Kidney (tissue), 22 donors: ENCODE measurements at regions of chr10 and their contacts with region 1.

Region 1: GRCh38 chr10:131885391-131886161 is 15.2 kb upstream of the PPP2R2D start:
- DNase-seq: peak; percentile 84 to 88 (median 87)
- H3K4me3 ChIP-seq: no peak overlapping the region
- H3K27ac ChIP-seq: no peak overlapping the region
- H3K4me1 ChIP-seq: no peaks in the 10 kb centered on the region
- H3K27me3 ChIP-seq: no peaks in the 10 kb centered on the region
- CTCF ChIP-seq: peak; percentile 99

Region 2: DNA sequence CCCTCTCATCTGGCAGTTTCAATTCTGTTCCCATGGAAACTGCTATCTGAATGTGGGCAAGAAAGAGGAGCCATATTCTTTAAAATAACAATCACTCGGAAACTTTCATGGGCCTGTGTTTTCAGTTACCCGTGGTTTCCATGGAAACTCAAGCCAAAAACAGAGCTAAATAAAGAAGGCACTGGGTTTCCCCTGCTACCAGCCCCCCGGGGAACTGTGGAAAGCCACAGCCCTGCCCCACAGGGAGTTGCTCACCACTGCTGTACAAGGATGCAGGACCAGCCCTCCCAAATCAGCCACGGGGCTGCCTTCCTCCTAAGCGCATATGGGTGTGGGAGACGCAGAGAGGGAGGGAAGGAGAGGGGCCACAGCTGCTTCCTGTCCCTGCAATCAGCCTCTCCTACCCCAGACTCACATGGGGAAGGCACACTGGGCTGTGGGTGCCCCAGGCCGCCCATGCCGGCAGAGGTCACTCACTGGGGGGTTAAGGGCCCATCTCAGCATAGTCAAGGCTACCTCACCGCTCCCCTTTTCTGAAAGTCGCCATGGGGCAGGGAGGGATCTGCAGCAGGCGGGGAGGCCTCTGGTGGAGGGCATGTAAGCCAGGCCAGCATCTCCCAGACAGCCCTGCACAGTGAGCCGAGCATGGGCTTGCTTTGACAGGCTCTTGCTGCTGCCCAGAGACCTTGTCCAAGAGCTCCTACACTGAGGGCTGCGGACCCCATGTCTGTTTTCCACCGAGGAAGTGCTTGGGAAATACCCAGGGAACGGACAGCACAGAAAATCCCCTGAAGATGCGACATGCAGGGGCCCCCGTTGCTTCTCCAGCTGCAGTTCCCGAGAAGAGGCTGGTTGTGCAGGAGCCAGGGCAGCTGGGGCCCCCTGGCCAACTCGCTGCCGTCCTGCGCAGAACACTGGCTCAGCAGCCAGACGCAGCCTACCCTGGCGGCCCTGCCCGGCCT is 142.1 kb before region 1 on chr10:
- intact Hi-C with region 1: no loop called
- DNase-seq: peak in 4 of 5 donors; percentile 49 to 77 (median 60)
- H3K4me3 ChIP-seq: no peak overlapping the region
- H3K27ac ChIP-seq: no peak overlapping the region
- H3K4me1 ChIP-seq: peaks cover 0 to 1% (median 0%) of the 10 kb centered on the region in 3 donors
- H3K27me3 ChIP-seq: no peaks in the 10 kb centered on the region
- CTCF ChIP-seq: no peak

Region 3: GRCh38 chr10:132023092-132023811 is 137.7 kb after region 1 on chr10:
- intact Hi-C with region 1: loop called (anchors 5 kb)
- DNase-seq: peak; percentile 80 to 92 (median 86)
- H3K4me3 ChIP-seq: peak overlapping the region in 2 of 3 donors; percentile 31 to 56
- H3K27ac ChIP-seq: no peak overlapping the region
- H3K4me1 ChIP-seq: no peaks in the 10 kb centered on the region
- H3K27me3 ChIP-seq: peaks cover 5% of the 10 kb centered on the region
- CTCF ChIP-seq: peak; percentile 95